ENCODE measurements at regions of chr3 and their contacts with region 1.

Region 1: DNA sequence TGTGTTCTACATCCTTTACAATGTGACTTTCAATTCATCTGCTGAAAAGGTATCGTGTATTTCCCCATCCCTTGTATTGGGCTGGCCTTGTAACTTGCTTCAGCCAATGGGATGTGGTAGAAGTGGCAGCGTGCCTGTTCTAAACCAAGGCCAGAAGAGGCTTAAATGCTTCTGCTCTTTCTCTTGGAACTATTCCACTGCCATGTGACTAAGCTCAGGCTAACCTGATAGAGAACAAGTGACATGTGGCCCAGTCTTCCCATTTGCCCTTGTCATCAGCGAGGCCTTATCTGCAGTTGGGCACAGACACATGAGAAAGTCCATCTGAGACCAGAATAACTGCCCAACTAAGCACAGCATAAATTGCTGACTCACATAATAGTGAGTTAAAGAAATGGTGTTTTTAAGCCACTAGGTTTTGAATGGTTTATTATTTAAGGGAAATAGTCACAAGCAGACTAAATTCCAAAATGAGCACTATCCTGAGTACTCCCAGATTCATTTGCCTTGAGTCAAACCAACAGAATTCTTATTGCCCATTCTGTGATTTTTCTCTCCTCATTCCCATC is 230.2 kb downstream of the CPNE4 start:
- DNase-seq: peak in 4 of 5 donors; percentile 65 to 85 (median 78)
- ATAC-seq: peak; percentile 97 to 99 (median 98)
- H3K4me3 ChIP-seq: peak overlapping the region in 8 of 12 donors; percentile 7 to 48 (median 22)
- H3K27ac ChIP-seq: peak overlapping the region in 10 of 12 donors; percentile 25 to 78 (median 50)
- H3K4me1 ChIP-seq: peaks cover 0 to 38% (median 0%) of the 10 kb centered on the region in 12 donors
- H3K27me3 ChIP-seq: no peaks in the 10 kb centered on the region
- CTCF ChIP-seq: no peak
- POLR2A ChIP-seq: no peak

Region 2: DNA sequence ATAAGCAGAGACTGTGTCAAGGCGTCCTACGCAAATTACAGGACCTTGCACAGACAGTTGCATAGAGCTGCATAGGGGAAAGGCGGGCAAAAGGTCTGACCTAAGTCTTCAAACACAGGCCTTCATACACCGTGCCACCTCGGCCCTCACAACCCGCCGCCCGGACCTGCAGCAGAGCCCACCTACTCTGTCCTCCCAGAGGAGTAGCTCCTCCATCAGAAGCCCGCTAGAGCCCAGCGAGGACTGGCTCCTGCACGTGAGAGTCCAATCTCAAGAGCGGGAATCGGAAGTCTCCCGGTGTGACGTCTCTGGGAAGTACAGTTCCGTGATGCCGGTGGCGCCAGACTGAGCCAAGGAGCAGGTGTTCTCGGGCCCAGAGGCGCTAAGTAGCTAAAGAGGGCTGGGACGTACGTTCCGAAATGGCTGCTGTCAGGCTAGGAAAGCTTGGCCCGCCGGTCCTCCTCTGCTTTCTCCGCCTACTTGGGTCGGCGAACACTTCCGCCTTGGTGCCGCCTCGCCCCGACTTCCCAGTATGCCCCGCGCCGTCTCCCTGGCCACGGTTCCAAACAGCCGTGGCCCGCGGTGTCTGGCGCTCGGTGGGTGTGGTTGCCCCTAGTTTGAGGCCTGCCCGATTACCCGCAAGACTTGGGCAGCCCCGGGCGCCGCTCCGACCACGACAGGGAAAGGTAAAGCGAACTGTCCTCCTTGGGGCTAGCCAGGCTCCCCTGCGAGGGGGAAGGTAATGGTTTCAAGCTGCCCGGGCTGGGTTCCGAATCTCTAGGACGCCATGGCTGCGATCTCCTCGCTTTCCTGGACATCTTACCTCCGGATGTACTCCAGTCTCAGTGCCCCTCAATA is 778.1 kb before region 1 on chr3 and contains the starts of genes ASTE1 and NEK11:
- intact Hi-C with region 1: no loop called
- DNase-seq: peak; percentile 89 to 95 (median 92)
- ATAC-seq: peak; percentile 95 to 99 (median 99)
- H3K4me3 ChIP-seq: peak within 1 kb of the TSS; percentile 58 to 90 (median 68)
- H3K27ac ChIP-seq: peak within 1 kb of the TSS; percentile 57 to 93 (median 84)
- H3K4me1 ChIP-seq: peaks cover 0 to 50% (median 20%) of the 10 kb centered on the region in 12 donors
- H3K27me3 ChIP-seq: no peaks in the 10 kb centered on the region
- CTCF ChIP-seq: no peak
- POLR2A ChIP-seq: peak in 1 of 2 donors; percentile 51
- total RNA-seq, gene ASTE1: 1.9 to 5.7 (median 3.1) TPM
- total RNA-seq, gene NEK11: 1.5 to 4.3 (median 2.1) TPM

Region 3: GRCh38 chr3:131543714-131544113 is 260.9 kb before region 1 on chr3:
- intact Hi-C with region 1: loop called in 2 of 10 experiments (anchors 10 kb)
- DNase-seq: peak; percentile 68 to 89 (median 78)
- ATAC-seq: peak; percentile 85 to 99 (median 96)
- H3K4me3 ChIP-seq: no peak overlapping the region
- H3K27ac ChIP-seq: peak overlapping the region in 8 of 12 donors; percentile 9 to 70 (median 48)
- H3K4me1 ChIP-seq: peaks cover 0 to 12% (median 3%) of the 10 kb centered on the region in 12 donors
- H3K27me3 ChIP-seq: no peaks in the 10 kb centered on the region
- CTCF ChIP-seq: peak in 1 of 12 donors; percentile 12
- POLR2A ChIP-seq: no peak

Region 4: DNA sequence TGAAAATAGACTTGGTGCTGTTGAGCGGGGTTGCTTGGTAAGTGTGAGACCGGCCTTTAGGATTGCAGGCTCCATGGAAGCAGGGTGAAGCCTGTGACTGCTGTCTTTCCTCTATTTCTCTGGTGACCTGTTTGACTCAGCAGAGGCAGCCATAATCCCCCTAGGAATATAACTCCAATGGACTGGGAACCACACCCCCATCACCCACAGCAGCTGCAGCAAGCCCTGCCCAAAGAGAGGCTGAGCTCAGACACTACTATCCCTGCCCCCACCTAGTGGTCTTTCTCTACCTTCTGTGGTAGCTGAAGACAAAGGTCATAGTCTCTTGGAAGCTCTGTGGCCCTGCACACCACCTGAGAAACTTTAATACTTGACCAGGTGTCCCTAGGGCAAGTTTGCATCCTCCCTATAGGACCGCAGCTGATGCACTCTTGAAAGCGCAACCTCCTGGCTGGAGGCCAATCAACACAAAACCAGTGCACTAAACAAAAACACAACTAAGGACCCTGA is 168.3 kb before region 1 on chr3:
- intact Hi-C with region 1: no loop called
- DNase-seq: no peak
- ATAC-seq: no peak
- H3K4me3 ChIP-seq: no peak overlapping the region
- H3K27ac ChIP-seq: no peak overlapping the region
- H3K4me1 ChIP-seq: no peaks in the 10 kb centered on the region
- H3K27me3 ChIP-seq: no peaks in the 10 kb centered on the region
- CTCF ChIP-seq: no peak
- POLR2A ChIP-seq: no peak

Region 5: GRCh38 chr3:132174500-132174899 is 369.9 kb after region 1 on chr3:
- intact Hi-C with region 1: loop called in 1 of 10 experiments (anchors 10 kb)
- DNase-seq: no peak
- ATAC-seq: no peak
- H3K4me3 ChIP-seq: no peak overlapping the region
- H3K27ac ChIP-seq: no peak overlapping the region
- H3K4me1 ChIP-seq: no peaks in the 10 kb centered on the region
- H3K27me3 ChIP-seq: peaks cover 0 to 13% (median 0%) of the 10 kb centered on the region in 9 donors
- CTCF ChIP-seq: no peak
- POLR2A ChIP-seq: no peak